AG04449 (cell line): ENCODE measurements at regions of chr3 and their contacts with region 1.

Region 1: DNA sequence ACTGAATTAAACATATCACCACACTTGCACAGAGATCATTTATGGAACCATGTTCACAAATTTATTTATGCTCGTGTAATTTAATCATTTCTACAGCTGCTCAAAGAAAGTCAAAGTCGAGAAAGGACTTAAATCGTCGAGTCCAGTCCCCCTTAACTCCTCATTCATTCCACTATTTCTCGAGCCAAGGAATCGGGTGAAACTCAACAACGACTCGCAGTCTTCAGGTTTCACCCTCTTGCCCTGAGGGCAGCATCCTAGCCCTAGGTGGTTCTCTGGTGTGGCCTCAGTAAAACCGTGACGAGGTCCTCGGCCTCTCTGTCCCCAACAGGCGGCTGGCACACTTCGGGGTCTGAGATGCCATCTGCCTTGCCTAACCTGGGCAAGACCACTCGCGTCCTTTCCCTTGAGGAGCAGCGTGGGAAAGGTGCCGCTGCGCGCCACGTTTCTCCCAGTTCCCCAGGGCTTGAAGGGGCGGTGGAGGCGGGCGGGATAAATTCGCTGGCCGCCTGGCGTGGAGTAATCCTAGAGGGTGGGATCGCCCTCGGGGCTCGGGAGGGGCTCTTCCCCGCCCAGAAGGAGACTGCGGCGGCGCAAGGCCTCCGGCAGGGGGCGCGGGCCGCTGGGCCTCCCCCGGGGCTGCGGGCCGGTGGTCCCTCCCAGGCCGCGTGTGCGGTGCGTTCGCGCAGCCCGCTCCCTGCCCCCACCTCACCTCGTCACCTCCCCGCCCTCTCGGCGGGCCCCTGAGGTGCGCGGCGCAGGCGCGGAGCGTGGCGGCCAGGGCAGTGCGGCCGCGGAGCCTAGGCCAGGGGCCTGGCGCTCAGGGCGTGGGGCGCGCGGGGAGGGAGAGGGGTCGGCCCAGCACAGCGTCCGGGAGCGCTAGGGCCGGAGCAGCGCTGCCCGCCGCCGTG is at the start of gene ZNF639:
- DNase-seq: no peak
- H3K4me3 ChIP-seq: peak within 1 kb of the TSS; percentile 86
- CTCF ChIP-seq: peak; percentile 66

Region 2: GRCh38 chr3:179015551-179016020 is 307.0 kb before region 1 on chr3:
- CTCF ChIA-PET with region 1: interaction called, 70 read pairs
- POLR2A ChIA-PET with region 1: no interaction called
- DNase-seq: no peak
- H3K4me3 ChIP-seq: no peak overlapping the region
- CTCF ChIP-seq: peak; percentile 59

Region 3: GRCh38 chr3:179063945-179064560 is 258.5 kb before region 1 on chr3:
- CTCF ChIA-PET with region 1: interaction called, 76 read pairs
- POLR2A ChIA-PET with region 1: no interaction called
- DNase-seq: no peak
- H3K4me3 ChIP-seq: no peak overlapping the region
- CTCF ChIP-seq: no peak

Region 4: DNA sequence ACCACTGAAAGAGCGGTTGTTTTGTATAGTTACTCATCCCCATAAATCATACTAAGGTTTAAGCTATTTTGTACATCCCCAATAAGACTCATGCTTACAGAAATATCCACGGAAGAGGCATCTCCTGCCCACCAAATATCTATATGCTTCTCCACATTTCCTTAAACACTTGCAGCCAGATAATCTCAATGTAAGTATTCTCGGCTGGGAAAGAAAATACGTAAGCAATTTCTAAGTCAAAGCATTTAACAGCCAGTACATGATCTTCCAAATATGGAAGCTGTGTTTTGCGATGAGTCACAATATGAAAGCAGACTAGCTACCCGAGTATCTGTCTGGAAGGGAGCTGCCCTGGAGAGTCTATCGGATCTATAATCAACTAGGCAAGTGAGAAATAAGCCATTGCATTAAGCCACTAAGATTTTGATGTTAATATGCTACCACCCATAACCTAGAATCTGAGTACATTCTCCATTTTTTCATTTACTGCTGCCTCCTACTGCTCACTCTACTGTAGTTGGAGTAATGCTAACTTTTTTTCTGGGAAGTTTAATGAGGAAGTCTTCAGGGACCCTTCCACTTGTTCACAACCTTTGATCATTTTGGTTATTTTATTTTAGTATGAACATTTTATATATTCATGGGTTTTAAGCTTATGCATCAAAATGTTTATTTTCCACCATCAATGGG is 224.0 kb before region 1 on chr3:
- CTCF ChIA-PET with region 1: interaction called, 347 read pairs
- POLR2A ChIA-PET with region 1: no interaction called
- DNase-seq: no peak
- H3K4me3 ChIP-seq: peak overlapping the region; percentile 36
- CTCF ChIP-seq: no peak

Region 5: DNA sequence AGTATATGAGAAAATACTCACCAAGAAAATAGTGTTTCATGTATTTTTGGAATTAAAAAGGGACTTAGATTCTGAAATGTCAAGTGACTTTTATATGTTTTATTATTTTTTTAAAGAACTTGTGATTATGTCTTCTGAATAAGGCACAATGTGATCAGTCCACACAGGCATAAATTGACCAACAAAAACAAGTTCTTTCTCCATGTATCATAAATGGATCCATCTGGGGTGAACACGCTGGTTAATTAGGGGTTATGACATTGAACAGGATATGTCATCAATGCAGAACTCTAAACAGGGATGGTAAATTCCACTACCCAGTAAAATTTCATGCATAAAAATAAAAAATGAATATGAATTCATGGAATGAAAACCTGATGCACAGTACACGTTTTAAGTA is 205.7 kb before region 1 on chr3:
- CTCF ChIA-PET with region 1: interaction called, 12 read pairs
- POLR2A ChIA-PET with region 1: no interaction called
- DNase-seq: no peak
- H3K4me3 ChIP-seq: no peak overlapping the region
- CTCF ChIP-seq: no peak

Region 6: DNA sequence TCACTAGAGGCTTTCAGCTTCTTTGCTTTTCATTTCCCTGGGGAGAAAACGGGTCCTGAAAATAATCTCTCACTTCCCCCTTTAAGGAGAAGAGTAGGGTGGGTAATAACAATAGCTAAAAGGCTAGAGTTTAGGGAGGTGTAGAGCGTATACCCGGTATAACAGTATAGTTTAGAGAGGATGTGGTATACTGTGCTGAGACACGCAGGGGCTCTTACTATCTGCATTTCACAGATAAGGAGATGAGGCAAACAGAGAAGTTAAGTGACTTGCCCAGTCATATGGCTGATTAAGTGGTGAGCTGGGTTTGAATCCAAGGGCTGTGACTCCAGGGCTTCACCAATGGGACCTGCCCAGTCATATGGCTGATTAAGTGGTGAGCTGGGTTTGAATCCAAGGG is 56.7 kb before region 1 on chr3:
- CTCF ChIA-PET with region 1: interaction called, 10 read pairs
- POLR2A ChIA-PET with region 1: no interaction called
- DNase-seq: no peak
- H3K4me3 ChIP-seq: no peak overlapping the region
- CTCF ChIP-seq: no peak

Region 7: GRCh38 chr3:179544981-179545645 is 222.6 kb after region 1 on chr3:
- CTCF ChIA-PET with region 1: no interaction called
- POLR2A ChIA-PET with region 1: no interaction called
- DNase-seq: peak; percentile 51
- H3K4me3 ChIP-seq: no peak overlapping the region
- CTCF ChIP-seq: no peak

Region 8: DNA sequence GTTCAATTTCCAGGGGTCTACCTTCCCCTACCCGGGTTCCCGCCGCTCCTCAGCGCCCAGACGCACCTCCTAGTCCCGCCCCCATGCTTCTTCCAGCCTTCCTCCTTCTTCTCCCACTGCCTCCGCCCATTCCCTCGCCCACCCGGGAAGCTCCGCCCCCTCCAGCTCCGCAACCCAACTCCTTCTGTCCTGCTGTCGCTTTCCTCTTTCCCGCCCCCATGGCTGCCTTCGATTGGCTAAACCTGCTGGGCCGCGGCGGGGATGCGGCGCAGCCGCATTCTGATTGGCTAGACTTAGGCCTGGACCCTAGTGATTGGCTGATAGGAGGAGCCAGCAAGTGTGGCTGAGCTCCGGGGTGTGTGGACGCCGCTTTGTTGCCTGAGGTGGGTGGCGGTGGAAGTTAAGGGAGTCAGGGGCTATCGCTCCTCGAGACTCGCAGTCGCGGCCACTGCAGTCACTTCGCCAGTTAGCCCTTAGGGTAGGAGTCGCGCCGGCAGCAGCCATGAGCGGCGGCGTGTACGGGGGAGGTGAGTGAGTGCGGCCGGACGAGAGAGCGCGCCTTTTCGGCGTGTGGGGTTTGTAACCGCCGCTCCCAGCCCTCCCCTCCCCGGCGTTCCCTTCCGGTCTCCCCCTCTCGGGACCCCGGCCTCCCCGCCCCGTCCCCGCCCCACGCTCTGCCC is 240.2 kb after region 1 on chr3 and contains the start of gene ACTL6A:
- CTCF ChIA-PET with region 1: interaction called, 17 read pairs
- POLR2A ChIA-PET with region 1: interaction called, 6 read pairs
- DNase-seq: peak; percentile 94
- H3K4me3 ChIP-seq: peak within 1 kb of the TSS; percentile 98
- CTCF ChIP-seq: no peak